OCI-LY7 (cell line): ENCODE measurements at regions of chr18 and their contacts with region 1.

Region 1: GRCh38 chr18:44679056-44679905 is 1.4 kb upstream of the SETBP1 start:
- DNase-seq: peak; percentile 81
- H3K4me3 ChIP-seq: peak overlapping the region; percentile 70
- H3K27ac ChIP-seq: peak overlapping the region; percentile 57
- H3K4me1 ChIP-seq: peaks cover 34% of the 10 kb centered on the region
- CTCF ChIP-seq: peak; percentile 71

Region 2: DNA sequence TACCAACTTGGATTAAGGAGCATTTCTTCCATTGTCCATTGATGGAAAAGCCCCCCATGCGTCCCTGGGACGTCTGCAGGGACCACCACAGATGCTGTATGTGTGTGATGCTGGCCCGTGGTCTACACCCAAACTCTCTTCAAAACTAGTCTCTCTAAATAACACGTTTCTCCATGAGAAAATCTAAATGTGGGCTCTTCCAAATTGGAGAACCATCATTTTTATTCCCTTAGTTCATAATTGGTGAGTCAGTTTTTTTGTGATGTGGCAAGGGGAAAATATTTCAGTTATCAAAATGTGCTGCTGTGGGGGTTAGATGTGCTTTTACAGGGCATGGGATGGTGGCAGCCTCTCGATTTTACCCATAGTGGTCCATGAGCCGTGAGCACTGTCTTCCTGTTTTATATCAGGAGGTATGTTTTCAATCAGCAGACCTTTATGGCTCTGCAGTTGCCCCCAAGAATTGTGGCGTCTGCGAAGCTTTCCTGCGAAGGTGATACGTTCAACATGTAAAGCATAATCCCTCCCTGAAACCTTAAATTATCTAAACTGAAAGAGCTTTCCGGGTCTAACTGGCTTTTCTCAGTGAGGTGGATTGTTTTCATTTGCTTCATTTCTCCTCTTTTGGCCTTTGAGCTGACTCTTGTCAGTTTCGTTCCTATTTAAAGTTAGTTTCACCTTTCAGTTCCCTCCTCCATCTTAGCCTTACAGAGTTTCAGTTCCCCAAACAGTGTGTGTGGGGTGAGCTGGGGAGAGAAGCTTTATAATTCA is 79.8 kb after region 1 on chr18:
- CTCF ChIA-PET with region 1: no interaction called
- POLR2A ChIA-PET with region 1: interaction called, 3 read pairs
- intact Hi-C with region 1: loop called (anchors 1 kb)
- DNase-seq: peak; percentile 89
- H3K4me3 ChIP-seq: peak overlapping the region; percentile 49
- H3K27ac ChIP-seq: peak overlapping the region; percentile 100
- H3K4me1 ChIP-seq: peaks cover 48% of the 10 kb centered on the region
- CTCF ChIP-seq: no peak

Region 3: DNA sequence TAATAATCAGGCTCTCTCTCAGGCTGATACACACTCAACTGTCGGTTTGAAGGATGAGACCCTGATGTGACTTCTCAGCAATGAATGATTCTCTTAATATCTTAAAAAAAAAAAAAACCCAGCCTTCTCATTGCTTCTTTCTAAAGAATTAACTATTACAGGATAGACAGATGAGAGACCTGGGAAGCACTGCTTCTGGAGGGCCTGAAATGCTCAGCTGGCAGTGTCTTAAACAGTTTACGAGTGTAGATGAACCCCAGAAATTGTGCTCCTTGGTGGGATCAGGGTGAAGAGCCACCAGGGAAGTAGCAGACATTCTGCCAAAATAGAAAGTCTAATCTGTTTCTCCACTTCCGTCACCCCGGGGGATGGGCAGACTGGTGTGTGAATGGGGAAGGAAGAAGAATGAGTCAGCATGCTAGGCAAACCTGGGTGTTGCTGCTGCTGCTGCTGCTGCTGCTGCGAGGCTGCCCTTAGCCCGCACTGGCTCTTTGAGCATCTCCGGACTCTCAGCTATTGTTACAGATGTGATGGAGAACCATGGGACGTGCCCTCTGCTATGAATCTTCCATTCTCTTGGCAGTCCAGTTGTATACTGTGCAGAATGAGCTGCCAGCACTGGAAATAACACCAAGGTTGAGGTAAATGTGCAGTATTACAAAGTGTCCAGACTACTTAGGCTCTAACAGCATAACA is 159.8 kb after region 1 on chr18:
- CTCF ChIA-PET with region 1: interaction called, 3 read pairs
- POLR2A ChIA-PET with region 1: no interaction called
- intact Hi-C with region 1: loop called (anchors 5 kb)
- DNase-seq: no peak
- H3K4me3 ChIP-seq: no peak overlapping the region
- H3K27ac ChIP-seq: no peak overlapping the region
- H3K4me1 ChIP-seq: peaks cover 8% of the 10 kb centered on the region
- CTCF ChIP-seq: no peak

Region 4: GRCh38 chr18:44895176-44895798 is 216.0 kb after region 1 on chr18:
- CTCF ChIA-PET with region 1: no interaction called
- POLR2A ChIA-PET with region 1: no interaction called
- intact Hi-C with region 1: loop called (anchors 10 kb)
- DNase-seq: peak; percentile 46
- H3K4me3 ChIP-seq: no peak overlapping the region
- H3K27ac ChIP-seq: no peak overlapping the region
- H3K4me1 ChIP-seq: no peaks in the 10 kb centered on the region
- CTCF ChIP-seq: peak; percentile 58

Region 5: GRCh38 chr18:45103319-45104048 is 424.2 kb after region 1 on chr18:
- CTCF ChIA-PET with region 1: no interaction called
- POLR2A ChIA-PET with region 1: no interaction called
- intact Hi-C with region 1: loop called (anchors 1 kb)
- DNase-seq: peak; percentile 71
- H3K4me3 ChIP-seq: peak overlapping the region; percentile 44
- H3K27ac ChIP-seq: peak overlapping the region; percentile 93
- H3K4me1 ChIP-seq: peaks cover 66% of the 10 kb centered on the region
- CTCF ChIP-seq: no peak

Region 6: DNA sequence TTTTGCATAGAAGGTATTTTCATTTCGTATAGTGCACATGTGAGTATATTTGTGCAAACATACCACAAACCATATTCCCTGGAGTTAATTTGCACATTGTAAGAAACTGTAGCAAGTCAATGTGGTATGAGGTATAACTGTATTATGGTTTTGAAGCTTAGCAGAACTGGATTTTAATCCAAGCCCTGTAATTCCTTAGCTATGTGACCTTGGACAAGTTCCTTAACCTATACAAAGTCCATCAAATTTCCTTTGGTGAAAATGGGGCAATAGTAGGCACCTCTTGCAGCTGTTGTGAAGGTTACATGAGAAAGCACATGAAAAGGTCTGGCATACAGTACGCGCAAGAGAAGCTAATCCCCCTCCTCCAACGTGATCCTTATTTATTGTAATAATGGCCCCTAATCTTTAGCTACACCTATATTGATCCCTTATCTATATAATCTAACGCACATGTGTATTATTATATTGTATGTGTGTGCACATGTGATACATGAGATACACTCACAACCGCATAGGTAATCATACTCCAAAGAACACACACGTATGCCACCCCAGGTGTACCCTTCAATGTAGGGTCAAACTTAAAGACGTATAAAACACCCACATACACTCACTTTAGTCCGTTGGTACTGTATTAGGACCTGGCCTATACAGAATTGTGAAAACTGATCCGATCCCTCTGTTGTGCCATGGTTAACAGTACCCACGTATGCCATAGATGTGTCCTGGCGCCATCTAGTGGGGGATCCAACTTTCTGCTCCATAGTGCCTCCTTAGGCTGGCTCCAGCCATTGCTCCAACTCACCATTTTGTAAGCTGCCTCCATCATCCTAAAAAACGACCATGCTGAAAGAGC is 533.1 kb after region 1 on chr18:
- CTCF ChIA-PET with region 1: no interaction called
- POLR2A ChIA-PET with region 1: no interaction called
- intact Hi-C with region 1: loop called (anchors 2 kb)
- DNase-seq: peak; percentile 74
- H3K4me3 ChIP-seq: no peak overlapping the region
- H3K27ac ChIP-seq: no peak overlapping the region
- H3K4me1 ChIP-seq: no peaks in the 10 kb centered on the region
- CTCF ChIP-seq: peak; percentile 87